CD4-positive, alpha-beta memory T cell (primary cell): ENCODE measurements at regions of chr12 and their contacts with region 1.

Region 1: GRCh38 chr12:66130277-66131066 is at the start of gene LLPH:
- DNase-seq: peak; percentile 84 to 93 (median 86)
- H3K4me3 ChIP-seq: peak within 1 kb of the TSS; percentile 72 to 86
- H3K4me3 Mint-ChIP-seq: peak within 1 kb of the TSS; percentile 92 to 99 (median 96)
- H3K27ac ChIP-seq: peak within 1 kb of the TSS; percentile 83
- H3K27ac Mint-ChIP-seq: peak within 1 kb of the TSS; percentile 93 to 99 (median 98)
- H3K4me1 ChIP-seq: peaks cover 37% of the 10 kb centered on the region
- H3K4me1 Mint-ChIP-seq: peaks cover 40 to 61% (median 45%) of the 10 kb centered on the region in 4 donors
- H3K27me3 ChIP-seq: no peaks in the 10 kb centered on the region
- H3K27me3 Mint-ChIP-seq: no peaks in the 10 kb centered on the region
- total RNA-seq, gene LLPH: 25.8 to 26.4 TPM

Region 2: DNA sequence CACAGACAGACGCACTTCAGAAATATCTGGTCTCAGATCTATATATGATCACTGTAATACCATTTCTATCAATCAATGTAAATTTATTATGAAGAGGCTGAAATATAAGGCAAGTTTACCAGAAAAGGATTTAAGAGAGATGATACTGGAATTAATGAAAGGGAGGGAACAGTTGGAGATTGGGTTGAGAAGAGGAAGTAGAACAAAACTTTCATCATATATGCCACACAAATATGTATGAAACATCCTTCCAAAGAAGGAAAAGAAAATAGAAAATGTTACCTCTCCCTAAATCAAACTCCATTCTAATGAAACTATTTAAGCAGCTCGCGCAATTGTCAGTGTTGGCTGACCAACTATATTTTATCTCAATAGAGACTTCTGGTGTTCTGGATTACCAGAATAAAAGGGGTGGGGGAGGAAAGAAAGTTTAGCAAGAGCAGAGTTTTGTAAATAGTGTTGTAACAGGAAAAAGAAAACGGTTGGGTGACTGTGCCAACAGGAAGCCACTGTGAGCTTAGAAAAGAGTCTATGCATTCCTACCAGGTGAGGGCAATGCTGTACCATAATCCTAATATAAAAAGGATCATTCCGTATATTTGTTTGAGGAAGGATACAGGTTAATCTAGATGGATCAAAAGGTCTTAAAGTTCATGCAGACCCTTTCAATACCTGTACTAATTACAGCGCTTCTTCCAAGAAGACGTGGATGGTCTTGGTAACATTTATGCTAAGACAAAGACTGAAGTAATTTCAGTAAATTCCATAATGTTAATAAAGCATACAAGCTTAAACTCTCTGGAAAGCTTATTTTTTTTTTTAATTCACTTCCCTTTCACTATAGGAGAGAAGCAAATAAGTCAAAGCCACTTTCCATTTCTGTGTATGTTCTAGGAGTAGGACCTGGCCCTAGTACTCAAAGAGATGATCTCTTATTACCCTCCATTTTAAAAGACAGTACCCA is 14.6 kb after region 1 on chr12:
- CTCF ChIA-PET with region 1: no interaction called
- POLR2A ChIA-PET with region 1: interaction called, 16 read pairs
- intact Hi-C with region 1: no loop called
- DNase-seq: no peak
- H3K4me3 ChIP-seq: no peak overlapping the region
- H3K4me3 Mint-ChIP-seq: no peak overlapping the region
- H3K27ac ChIP-seq: no peak overlapping the region
- H3K27ac Mint-ChIP-seq: peak overlapping the region in 6 of 7 donors; percentile 29 to 72 (median 37)
- H3K4me1 ChIP-seq: no peaks in the 10 kb centered on the region
- H3K4me1 Mint-ChIP-seq: peaks cover 4 to 14% (median 8%) of the 10 kb centered on the region in 4 donors
- H3K27me3 ChIP-seq: no peaks in the 10 kb centered on the region
- H3K27me3 Mint-ChIP-seq: no peaks in the 10 kb centered on the region

Region 3: DNA sequence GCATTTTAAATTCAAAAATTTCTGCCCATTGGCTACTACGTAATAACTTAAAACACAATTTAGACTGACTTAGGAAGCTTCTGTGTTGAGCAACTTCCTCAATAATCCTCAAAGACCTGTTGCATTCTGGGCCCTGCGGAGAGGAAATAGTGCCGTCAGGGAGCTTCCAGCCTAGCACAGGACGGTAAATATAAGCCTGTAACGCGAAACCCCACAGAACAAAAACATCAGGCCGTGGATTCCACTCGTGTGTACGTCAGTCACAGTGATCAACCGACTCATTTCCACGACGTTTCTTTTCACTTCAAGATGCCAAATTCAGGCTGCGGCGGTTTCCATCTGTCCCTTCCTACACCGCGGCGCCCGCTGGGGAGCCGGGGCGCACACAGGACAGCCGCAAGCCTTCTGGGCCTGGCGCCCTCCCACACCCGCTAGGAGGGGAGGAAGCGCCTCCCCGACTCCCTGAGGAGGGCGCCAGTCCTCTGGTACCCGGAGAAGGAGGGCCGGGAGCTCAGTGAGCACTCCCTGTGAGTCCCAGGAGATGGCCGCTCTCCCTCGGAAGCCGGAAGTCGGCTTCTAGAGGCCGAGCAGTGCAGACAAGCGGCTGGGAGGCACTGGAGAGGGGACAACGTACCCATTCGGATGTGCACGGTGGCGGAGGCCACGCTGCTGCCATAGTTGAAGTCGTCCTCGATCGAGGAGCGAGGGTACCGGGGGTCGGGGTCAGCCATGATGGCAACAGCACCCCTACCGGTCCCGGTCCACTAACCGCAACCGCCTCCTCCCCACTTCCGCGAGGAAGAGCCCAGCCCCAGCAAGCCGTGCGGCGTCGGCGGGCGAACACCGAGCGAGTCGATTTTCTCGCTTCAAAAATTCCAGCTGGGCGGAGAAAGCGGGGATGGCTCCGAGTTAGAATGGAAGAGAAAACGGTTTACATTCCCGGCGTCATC is 39.0 kb after region 1 on chr12 and contains the start of gene TMBIM4:
- CTCF ChIA-PET with region 1: interaction called, 15 read pairs
- POLR2A ChIA-PET with region 1: interaction called, 115 read pairs
- intact Hi-C with region 1: loop called (anchors 1 kb)
- DNase-seq: peak; percentile 86 to 94 (median 87)
- H3K4me3 ChIP-seq: peak within 1 kb of the TSS; percentile 85 to 92
- H3K4me3 Mint-ChIP-seq: peak within 1 kb of the TSS; percentile 91 to 98 (median 96)
- H3K27ac ChIP-seq: peak within 1 kb of the TSS; percentile 98
- H3K27ac Mint-ChIP-seq: peak within 1 kb of the TSS; percentile 95 to 99 (median 98)
- H3K4me1 ChIP-seq: peaks cover 43% of the 10 kb centered on the region
- H3K4me1 Mint-ChIP-seq: peaks cover 33 to 61% (median 48%) of the 10 kb centered on the region in 4 donors
- H3K27me3 ChIP-seq: no peaks in the 10 kb centered on the region
- H3K27me3 Mint-ChIP-seq: peaks cover 2 to 3% of the 10 kb centered on the region in 2 donors
- total RNA-seq, gene TMBIM4: 98.5 to 108 TPM

Region 4: GRCh38 chr12:66288121-66288520 is 157.6 kb after region 1 on chr12:
- CTCF ChIA-PET with region 1: no interaction called
- POLR2A ChIA-PET with region 1: interaction called, 4 read pairs
- intact Hi-C with region 1: loop called (anchors 5 kb)
- DNase-seq: peak; percentile 86 to 92 (median 89)
- H3K4me3 ChIP-seq: peak overlapping the region; percentile 21 to 35
- H3K4me3 Mint-ChIP-seq: peak overlapping the region; percentile 36 to 79 (median 70)
- H3K27ac ChIP-seq: peak overlapping the region; percentile 35
- H3K27ac Mint-ChIP-seq: peak overlapping the region; percentile 61 to 94 (median 85)
- H3K4me1 ChIP-seq: peaks cover 100% of the 10 kb centered on the region
- H3K4me1 Mint-ChIP-seq: peaks cover 72 to 96% (median 83%) of the 10 kb centered on the region in 4 donors
- H3K27me3 ChIP-seq: no peaks in the 10 kb centered on the region
- H3K27me3 Mint-ChIP-seq: no peaks in the 10 kb centered on the region